ENCODE measurements at regions of chr1 and their contacts with region 1.

Region 1: GRCh38 chr1:94527447-94528031 is 14.0 kb downstream of the F3 start:
- DNase-seq: peak; percentile 64
- H3K4me3 Mint-ChIP-seq: no peak overlapping the region
- H3K27ac Mint-ChIP-seq: no peak overlapping the region
- H3K4me1 Mint-ChIP-seq: peaks cover 25% of the 10 kb centered on the region
- H3K27me3 Mint-ChIP-seq: no peaks in the 10 kb centered on the region
- CTCF ChIP-seq: no peak

Region 2: DNA sequence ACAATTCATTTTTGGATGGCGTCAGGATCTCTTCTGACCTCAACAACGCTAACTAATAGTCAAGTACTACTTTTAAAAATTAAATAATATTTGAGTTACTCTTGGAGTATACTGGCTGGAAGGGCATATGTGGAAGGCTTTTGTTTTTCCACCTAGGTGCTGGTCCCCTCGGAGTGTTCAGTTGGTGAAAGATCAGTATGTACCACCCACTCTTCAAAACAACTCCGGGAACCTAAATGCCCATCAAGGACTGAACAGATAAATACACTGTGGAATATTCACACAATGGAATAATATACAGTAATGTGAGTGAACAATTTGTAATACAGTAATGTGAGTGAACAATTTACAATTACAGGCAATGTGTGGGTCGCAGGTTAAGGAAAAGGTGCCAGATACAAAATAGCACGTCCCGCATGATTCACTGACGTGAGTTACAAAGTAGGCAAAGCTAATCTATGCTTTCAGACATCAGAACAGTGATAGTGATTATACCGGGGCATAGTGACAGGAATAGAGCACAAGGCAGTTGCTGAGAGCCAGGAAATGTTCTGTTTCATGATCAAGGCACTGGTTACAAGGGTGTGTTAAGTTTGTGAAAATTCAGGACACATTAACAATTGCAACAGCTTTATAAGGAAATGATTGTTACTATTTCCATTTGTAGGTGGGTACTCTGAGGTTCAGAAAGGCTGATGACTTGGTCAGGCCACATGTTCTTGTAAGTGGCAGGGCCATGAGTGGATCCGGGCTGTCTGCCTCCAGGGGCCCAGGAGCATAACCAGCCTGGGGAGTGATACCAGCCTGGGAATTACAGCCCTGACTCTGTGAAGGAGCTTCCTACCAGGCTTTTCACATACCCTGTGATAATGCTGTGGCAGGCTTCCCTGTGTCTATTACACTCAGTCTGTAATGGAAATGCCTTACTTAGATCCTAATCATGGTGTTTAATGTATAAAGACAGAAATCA is 168.6 kb before region 1 on chr1:
- CTCF ChIA-PET with region 1: no interaction called
- POLR2A ChIA-PET with region 1: no interaction called
- intact Hi-C with region 1: no loop called
- DNase-seq: no peak
- H3K4me3 Mint-ChIP-seq: no peak overlapping the region
- H3K27ac Mint-ChIP-seq: no peak overlapping the region
- H3K4me1 Mint-ChIP-seq: no peaks in the 10 kb centered on the region
- H3K27me3 Mint-ChIP-seq: no peaks in the 10 kb centered on the region
- CTCF ChIP-seq: no peak

Region 3: DNA sequence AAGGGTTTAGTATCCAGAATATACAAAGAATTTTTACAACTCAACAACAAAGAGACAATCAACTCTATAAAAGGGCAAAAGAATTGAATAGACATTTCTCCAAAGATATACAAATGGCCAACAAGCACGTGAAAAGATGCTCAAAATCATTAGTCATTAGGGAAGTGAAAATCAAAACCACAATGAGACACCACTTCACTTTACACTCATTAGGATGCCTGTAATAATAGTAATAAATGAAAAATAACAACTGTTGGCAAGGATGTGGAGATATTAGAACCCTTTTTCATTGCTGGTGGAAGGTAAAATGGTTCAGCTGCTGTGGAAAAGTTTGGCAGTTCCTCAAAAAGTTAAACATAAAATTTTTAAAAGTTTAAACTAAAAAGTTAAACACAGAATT is 116.3 kb before region 1 on chr1:
- CTCF ChIA-PET with region 1: no interaction called
- POLR2A ChIA-PET with region 1: no interaction called
- intact Hi-C with region 1: no loop called
- DNase-seq: no peak
- H3K4me3 Mint-ChIP-seq: no peak overlapping the region
- H3K27ac Mint-ChIP-seq: no peak overlapping the region
- H3K4me1 Mint-ChIP-seq: no peaks in the 10 kb centered on the region
- H3K27me3 Mint-ChIP-seq: peaks cover 21% of the 10 kb centered on the region
- CTCF ChIP-seq: no peak

Region 4: GRCh38 chr1:94514095-94514727 is 13.3 kb before region 1 on chr1:
- CTCF ChIA-PET with region 1: interaction called, 55 read pairs
- POLR2A ChIA-PET with region 1: no interaction called
- intact Hi-C with region 1: no loop called
- DNase-seq: peak; percentile 53
- H3K4me3 Mint-ChIP-seq: no peak overlapping the region
- H3K27ac Mint-ChIP-seq: no peak overlapping the region
- H3K4me1 Mint-ChIP-seq: no peaks in the 10 kb centered on the region
- H3K27me3 Mint-ChIP-seq: no peaks in the 10 kb centered on the region
- CTCF ChIP-seq: peak; percentile 63

Measured in MCF 10A (cell line).